K562 (cell line): ENCODE measurements at regions of chr1 and their contacts with region 1.

Region 1: GRCh38 chr1:110338886-110339406 is at the start of gene RBM15:
- DNase-seq: peak; percentile 93 to 100 (median 98)
- ATAC-seq: peak; percentile 84
- H3K4me3 ChIP-seq: peak within 1 kb of the TSS; percentile 82
- H3K27ac ChIP-seq: peak within 1 kb of the TSS; percentile 94
- H3K4me1 ChIP-seq: peaks cover 38 to 45% of the 10 kb centered on the region in 2 experiments
- H3K27me3 ChIP-seq: no peaks in the 10 kb centered on the region
- CTCF ChIP-seq: no peak
- EP300 ChIP-seq: peak; percentile 56
- POLR2A ChIP-seq: no peak
- RAD21 ChIP-seq: no peak
- polyA plus RNA-seq, gene RBM15: 2.4 to 4.7 TPM

Region 2: GRCh38 chr1:110034451-110035235 is 304.3 kb before region 1 on chr1 and contains the start of gene STRIP1:
- CTCF ChIA-PET with region 1: no interaction called
- POLR2A ChIA-PET with region 1: interaction called, 4 read pairs
- in situ Hi-C with region 1: no loop called
- intact Hi-C with region 1: loop called (anchors 5 kb)
- DNase-seq: peak; percentile 94 to 98 (median 94)
- ATAC-seq: peak; percentile 91
- H3K4me3 ChIP-seq: peak within 1 kb of the TSS; percentile 95
- H3K27ac ChIP-seq: peak within 1 kb of the TSS; percentile 88
- H3K4me1 ChIP-seq: peaks cover 16 to 40% of the 10 kb centered on the region in 2 experiments
- H3K27me3 ChIP-seq: no peaks in the 10 kb centered on the region
- CTCF ChIP-seq: peak in 1 of 3 experiments; percentile 60; a peak in 2 of 6 replicates
- EP300 ChIP-seq: no peak; the same call in none of the 2 replicates
- POLR2A ChIP-seq: peak; percentile 90
- RAD21 ChIP-seq: no peak
- polyA plus RNA-seq, gene STRIP1: 9.9 to 10.5 TPM

Region 3: DNA sequence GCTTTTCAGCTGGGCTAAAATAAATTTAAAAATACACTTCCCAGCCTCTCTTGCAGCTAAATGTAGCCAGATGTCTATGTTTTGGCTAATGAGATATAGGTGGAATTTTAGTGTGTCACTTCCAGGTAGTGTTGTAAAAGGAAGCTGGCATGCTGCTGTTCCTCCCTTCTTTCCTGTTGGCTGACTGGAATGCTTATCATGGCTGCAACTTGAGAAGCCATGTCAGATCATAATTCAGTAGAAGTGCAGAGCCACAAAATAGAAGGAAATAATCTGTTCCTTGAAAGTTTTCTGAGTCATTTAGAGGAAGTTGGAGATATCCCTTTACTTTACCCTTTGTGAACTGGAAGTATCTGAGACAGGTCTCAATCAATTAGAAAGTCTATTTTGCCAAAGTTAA is 10.7 kb before region 1 on chr1:
- CTCF ChIA-PET with region 1: no interaction called
- POLR2A ChIA-PET with region 1: interaction called, 36 read pairs
- in situ Hi-C with region 1: no loop called
- intact Hi-C with region 1: no loop called
- DNase-seq: peak in 2 of 4 experiments; percentile 34 to 35
- ATAC-seq: peak; percentile 17; the same call in 1 of the 3 replicates
- H3K4me3 ChIP-seq: no peak overlapping the region
- H3K27ac ChIP-seq: peak overlapping the region; percentile 29; the same call in 1 of the 3 replicates
- H3K4me1 ChIP-seq: peaks cover 4 to 16% of the 10 kb centered on the region in 2 experiments; a peak in 3 of 5 replicates
- H3K27me3 ChIP-seq: no peaks in the 10 kb centered on the region
- CTCF ChIP-seq: no peak
- EP300 ChIP-seq: no peak
- POLR2A ChIP-seq: no peak
- RAD21 ChIP-seq: no peak

Region 4: DNA sequence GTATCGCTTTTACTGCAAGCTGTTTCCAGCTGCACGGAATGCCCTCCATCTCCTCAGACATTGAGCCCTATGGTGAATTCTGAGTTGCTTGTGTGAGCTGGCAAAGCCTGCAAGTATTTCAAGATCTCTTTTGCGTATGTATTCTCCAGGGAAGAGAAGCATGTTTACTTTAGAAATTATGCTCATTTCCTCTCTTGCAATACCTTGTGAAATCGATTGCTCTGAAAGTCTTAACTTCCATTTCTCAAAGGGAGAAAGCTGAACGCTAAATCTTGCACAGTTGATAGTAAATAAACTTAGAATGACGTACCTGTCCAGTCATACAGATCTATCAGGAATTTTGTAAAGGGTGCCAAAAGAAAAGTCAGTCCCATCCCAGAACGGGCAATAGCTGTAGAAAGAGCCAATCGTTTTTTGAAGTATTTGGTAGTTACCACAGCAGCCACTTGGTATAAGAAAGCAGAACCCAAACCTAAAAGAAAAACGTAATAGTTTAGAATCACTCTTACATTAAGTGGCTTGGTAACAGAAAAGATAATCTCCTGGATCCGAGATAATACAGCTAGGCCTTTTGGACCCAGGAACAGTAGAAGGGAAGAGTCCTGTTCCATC is 41.8 kb after region 1 on chr1:
- CTCF ChIA-PET with region 1: interaction called, 4 read pairs
- POLR2A ChIA-PET with region 1: interaction called, 17 read pairs
- in situ Hi-C with region 1: no loop called
- intact Hi-C with region 1: no loop called
- DNase-seq: no peak
- ATAC-seq: no peak
- H3K4me3 ChIP-seq: no peak overlapping the region
- H3K27ac ChIP-seq: no peak overlapping the region
- H3K4me1 ChIP-seq: no peaks in the 10 kb centered on the region
- H3K27me3 ChIP-seq: no peaks in the 10 kb centered on the region
- CTCF ChIP-seq: no peak
- EP300 ChIP-seq: no peak
- POLR2A ChIP-seq: no peak; the same call in 1 of the 2 replicates
- RAD21 ChIP-seq: no peak

Region 5: DNA sequence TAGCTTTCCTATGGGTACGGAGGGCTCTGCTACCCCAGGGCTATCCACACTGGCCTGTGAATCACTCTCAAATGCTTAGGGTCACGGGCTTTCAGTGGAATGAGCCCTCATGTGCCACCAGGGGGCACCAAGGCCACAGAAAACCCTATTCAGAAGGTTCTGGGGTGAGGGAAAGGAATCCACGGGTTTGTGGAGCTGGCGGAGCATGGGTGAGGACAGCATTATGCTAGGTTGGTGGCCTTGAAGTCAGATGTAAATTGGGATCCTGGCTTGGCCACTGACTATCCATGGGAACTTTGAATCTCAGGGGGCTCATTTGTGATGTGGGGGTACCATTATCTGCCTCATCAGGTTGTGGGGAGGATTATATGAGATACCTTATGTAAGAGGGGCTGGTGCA is 73.6 kb after region 1 on chr1:
- CTCF ChIA-PET with region 1: no interaction called
- POLR2A ChIA-PET with region 1: interaction called, 9 read pairs
- in situ Hi-C with region 1: no loop called
- intact Hi-C with region 1: loop called (anchors 1 kb)
- DNase-seq: peak; percentile 84 to 94 (median 86)
- ATAC-seq: peak; percentile 90
- H3K4me3 ChIP-seq: no peak overlapping the region
- H3K27ac ChIP-seq: peak overlapping the region; percentile 11; the same call in 2 of the 3 replicates
- H3K4me1 ChIP-seq: peaks cover 0 to 40% of the 10 kb centered on the region in 2 experiments; a peak in 4 of 5 replicates
- H3K27me3 ChIP-seq: no peaks in the 10 kb centered on the region
- CTCF ChIP-seq: peak; percentile 92 to 98 (median 97)
- EP300 ChIP-seq: peak; percentile 21; the same call in 1 of the 2 replicates
- POLR2A ChIP-seq: no peak
- RAD21 ChIP-seq: peak; percentile 99

Region 6: DNA sequence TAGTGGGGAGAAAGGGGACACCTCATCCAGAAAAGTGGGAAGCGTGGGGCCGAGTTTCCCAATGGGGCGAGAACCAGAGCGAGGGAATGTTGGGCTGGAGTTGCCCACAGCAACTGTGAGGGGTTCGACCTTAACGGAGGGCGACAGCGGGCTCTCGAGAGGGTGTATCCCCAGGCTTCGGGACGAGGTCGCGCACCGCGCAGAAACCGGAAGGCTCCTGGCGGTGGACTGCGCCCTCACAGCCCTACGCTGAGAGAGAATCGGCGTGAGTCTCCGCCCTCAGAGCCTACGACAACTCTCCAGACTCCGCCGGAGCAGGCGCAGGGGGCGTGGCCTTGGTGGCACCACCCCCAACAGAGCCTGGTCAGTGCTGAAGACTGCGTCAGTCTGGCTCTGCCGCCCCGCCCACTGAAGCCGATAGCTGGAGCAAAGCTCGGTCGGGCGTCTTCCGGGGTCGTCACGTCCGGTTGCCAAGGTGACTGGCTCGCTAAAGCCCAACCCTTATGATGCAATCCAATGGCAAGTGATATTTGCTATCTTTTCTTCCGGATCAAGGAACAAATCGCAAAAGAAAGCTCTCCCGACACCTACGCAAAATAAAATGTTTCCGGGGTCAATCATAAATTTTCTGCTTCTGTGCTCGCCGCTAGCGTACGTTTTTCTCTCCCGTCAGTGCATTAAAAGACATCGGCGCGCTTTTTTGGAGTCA is 624.9 kb after region 1 on chr1 and contains the start of gene LRIF1:
- CTCF ChIA-PET with region 1: no interaction called
- POLR2A ChIA-PET with region 1: no interaction called
- in situ Hi-C with region 1: no loop called
- intact Hi-C with region 1: loop called (anchors 10 kb)
- DNase-seq: peak; percentile 97 to 100 (median 98)
- ATAC-seq: peak; percentile 97
- H3K4me3 ChIP-seq: peak within 1 kb of the TSS; percentile 76
- H3K27ac ChIP-seq: peak within 1 kb of the TSS; percentile 98
- H3K4me1 ChIP-seq: peaks cover 0 to 12% of the 10 kb centered on the region in 2 experiments; a peak in 2 of 5 replicates
- H3K27me3 ChIP-seq: no peaks in the 10 kb centered on the region
- CTCF ChIP-seq: peak; percentile 47 to 61 (median 57); a peak in 5 of 6 replicates
- EP300 ChIP-seq: peak; percentile 86
- POLR2A ChIP-seq: peak; percentile 99
- RAD21 ChIP-seq: peak in 1 of 2 experiments; percentile 7; a peak in 2 of 4 replicates
- polyA plus RNA-seq, gene LRIF1: 79.7 to 86.1 TPM